IMR-90 (cell line): ENCODE measurements at regions of chr9 and their contacts with region 1.

Region 1: GRCh38 chr9:130476151-130476730 is 31.5 kb downstream of the ASS1 start:
- DNase-seq: no peak
- ATAC-seq: no peak
- H3K4me3 ChIP-seq: no peak overlapping the region
- H3K27ac ChIP-seq: no peak overlapping the region
- H3K4me1 ChIP-seq: no peaks in the 10 kb centered on the region
- H3K27me3 ChIP-seq: peaks cover 15% of the 10 kb centered on the region
- CTCF ChIP-seq: no peak
- POLR2A ChIP-seq: no peak
- RAD21 ChIP-seq: no peak

Region 2: GRCh38 chr9:130578865-130579737 is 102.9 kb after region 1 on chr9 and contains the start of gene FUBP3:
- CTCF ChIA-PET with region 1: no interaction called
- POLR2A ChIA-PET with region 1: interaction called, 11 read pairs
- dilution Hi-C with region 1: no loop called
- in situ Hi-C with region 1: no loop called
- intact Hi-C with region 1: no loop called
- DNase-seq: peak; percentile 87
- ATAC-seq: peak; percentile 92
- H3K4me3 ChIP-seq: peak within 1 kb of the TSS; percentile 86
- H3K27ac ChIP-seq: peak within 1 kb of the TSS; percentile 89
- H3K4me1 ChIP-seq: peaks cover 2% of the 10 kb centered on the region
- H3K27me3 ChIP-seq: no peaks in the 10 kb centered on the region
- CTCF ChIP-seq: no peak
- POLR2A ChIP-seq: peak; percentile 88
- RAD21 ChIP-seq: no peak
- total RNA-seq, gene FUBP3: 32.3 and 41.9 TPM in 2 replicates